ENCODE measurements at regions of chr1 and their contacts with region 1.

Region 1: GRCh38 chr1:45011837-45012638 is at the start of gene UROD:
- DNase-seq: peak; percentile 92
- H3K4me3 ChIP-seq: peak within 1 kb of the TSS; percentile 93 to 96
- H3K27ac ChIP-seq: peak within 1 kb of the TSS; percentile 69 to 87
- H3K4me1 ChIP-seq: peaks cover 6 to 36% of the 10 kb centered on the region in 2 experiments
- H3K27me3 ChIP-seq: no peaks in the 10 kb centered on the region
- CTCF ChIP-seq: no peak
- EP300 ChIP-seq: 0 out of 4 replicates have a peak, but pooled peaks of 1 of the 2 experiments have one; percentile 33
- RAD21 ChIP-seq: no peak
- polyA plus RNA-seq, gene UROD: 230 and 247 TPM in 2 replicates

Region 2: DNA sequence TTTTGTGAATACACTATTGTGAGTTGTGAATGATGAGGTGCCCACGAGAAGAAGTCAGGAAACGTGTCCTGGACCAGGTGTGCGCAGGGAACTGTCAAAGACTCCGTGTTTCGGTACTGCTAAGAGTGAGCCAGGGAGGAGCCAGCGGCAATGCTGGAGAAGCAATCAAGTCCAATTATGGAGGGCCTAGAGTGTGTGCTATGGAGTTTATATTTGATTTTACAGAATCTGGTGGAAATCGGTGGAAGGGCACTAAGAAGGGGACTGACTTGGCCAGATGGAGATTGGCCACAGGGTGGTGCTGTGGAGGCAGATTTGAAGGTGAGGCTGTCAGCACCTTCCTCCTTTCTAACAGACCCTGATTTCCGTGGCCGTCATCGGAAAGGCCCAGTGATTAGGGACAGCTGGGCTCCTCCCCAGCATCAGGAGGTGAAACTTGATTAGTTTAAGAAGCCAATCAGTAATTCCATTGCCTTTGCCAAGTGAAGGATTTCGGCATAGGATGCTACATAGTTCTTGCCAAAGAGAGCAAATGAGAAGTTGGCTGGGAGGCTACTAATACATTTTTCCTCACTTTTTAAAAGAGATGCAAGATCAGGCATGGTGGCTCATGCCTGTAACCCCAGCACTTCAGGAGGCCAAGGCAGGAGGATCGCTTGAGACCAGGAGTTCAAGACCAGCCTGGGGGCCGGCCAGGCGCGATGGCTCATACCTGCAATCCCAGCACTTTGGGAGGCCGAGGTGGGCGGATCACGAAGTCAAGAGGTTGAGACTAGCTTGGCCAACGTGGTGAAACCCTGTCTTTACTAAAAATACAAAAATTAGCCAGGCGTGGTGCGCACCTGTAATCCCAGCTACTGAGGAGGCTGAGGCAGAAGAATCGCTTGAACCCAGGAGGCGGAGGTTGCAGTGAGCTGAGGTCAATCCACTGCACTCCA is 176.0 kb before region 1 on chr1:
- CTCF ChIA-PET with region 1: interaction called, 12 read pairs
- POLR2A ChIA-PET with region 1: interaction called, 4 read pairs
- DNase-seq: peak; percentile 83
- H3K4me3 ChIP-seq: no peak overlapping the region
- H3K27ac ChIP-seq: no peak overlapping the region
- H3K4me1 ChIP-seq: peaks cover 0 to 2% of the 10 kb centered on the region in 2 experiments; a peak in 1 of 4 replicates
- H3K27me3 ChIP-seq: no peaks in the 10 kb centered on the region
- CTCF ChIP-seq: peak; percentile 87
- EP300 ChIP-seq: no peak
- RAD21 ChIP-seq: peak; percentile 90

Region 3: DNA sequence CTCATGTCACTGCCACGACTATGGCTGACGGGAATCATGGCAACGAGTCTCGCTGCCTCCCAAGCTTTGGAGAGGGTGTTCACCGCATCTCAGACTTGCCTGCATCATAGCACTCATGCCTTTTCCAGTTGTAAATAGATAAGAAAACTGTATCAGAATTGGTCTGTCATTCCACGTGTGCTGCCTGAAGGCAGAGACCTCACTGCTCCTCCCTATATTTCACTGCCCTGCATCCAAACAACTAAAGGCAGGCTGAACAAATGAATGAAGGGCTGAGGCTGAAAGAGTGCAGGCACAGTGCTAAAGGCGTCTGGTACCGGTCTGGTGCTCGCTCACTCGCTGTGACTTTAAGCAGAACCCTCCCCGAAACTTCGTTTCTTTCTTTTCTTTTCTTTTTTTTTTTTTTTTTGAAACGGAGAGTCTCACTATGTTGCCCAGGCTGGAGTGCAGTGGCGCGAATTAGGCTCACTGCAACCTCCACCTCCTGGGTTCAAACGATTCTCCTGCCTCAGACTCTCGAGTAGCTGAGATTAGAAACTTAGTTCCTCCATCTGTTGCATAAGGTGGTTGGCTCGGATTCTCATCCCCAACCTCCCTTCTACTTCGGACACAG is 26.2 kb before region 1 on chr1:
- CTCF ChIA-PET with region 1: interaction called, 11 read pairs
- POLR2A ChIA-PET with region 1: no interaction called
- DNase-seq: no peak
- H3K4me3 ChIP-seq: peak overlapping the region; percentile 74 to 75
- H3K27ac ChIP-seq: peak overlapping the region in 1 of 2 experiments; percentile 33; a peak in 1 of 4 replicates
- H3K4me1 ChIP-seq: peaks cover 5 to 9% of the 10 kb centered on the region in 2 experiments; a peak in 2 of 4 replicates
- H3K27me3 ChIP-seq: no peaks in the 10 kb centered on the region
- CTCF ChIP-seq: no peak
- EP300 ChIP-seq: no peak
- RAD21 ChIP-seq: no peak

Region 4: DNA sequence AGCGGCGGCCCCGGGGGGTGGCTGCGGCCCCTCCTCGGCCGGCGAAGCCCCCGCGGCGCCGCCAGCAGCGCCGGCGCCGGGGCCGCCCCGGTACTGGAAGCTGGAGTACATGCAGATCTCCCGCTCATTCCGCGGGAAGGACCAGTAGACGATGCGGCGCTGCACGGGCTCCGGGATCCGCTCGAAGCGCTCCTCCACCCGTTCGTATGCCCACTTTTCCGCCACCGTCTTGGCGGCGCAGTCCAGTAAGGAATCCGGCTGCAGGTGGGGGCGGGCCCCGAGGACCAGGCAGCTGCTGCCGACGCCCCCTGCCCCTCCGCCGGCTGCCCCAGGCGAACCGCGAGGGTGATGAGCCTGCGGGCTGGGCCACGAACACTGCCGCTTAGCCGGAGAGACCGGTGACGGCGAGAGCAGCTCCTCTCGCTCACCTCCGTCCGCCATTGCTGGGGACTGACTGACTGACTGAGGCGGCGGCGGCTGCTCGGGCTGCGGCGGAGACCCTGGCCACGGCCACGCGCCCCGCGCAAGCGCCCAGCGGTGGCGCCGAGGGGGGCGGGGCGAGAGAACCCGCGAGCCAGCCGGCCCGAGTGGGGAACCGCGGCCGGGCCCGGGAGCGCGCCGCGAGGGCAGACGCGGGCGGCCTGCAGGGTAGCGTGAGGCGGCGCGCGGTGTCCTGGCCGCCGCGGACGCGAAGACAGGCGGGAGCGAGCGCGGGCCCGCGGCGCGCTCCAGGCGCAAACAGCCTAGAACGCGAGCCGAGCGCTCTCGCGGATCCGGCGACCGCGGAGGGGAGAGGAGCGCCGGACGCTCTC is 194.1 kb after region 1 on chr1 and contains the start of gene ZSWIM5:
- CTCF ChIA-PET with region 1: interaction called, 14 read pairs
- POLR2A ChIA-PET with region 1: no interaction called
- DNase-seq: peak; percentile 92
- H3K4me3 ChIP-seq: peak within 1 kb of the TSS; percentile 60 to 69
- H3K27ac ChIP-seq: peak within 1 kb of the TSS in 1 of 2 experiments; percentile 87; a peak in 2 of 4 replicates
- H3K4me1 ChIP-seq: peaks cover 0 to 3% of the 10 kb centered on the region in 2 experiments; a peak in 2 of 4 replicates
- H3K27me3 ChIP-seq: peaks cover 42% of the 10 kb centered on the region; the same call in 1 of the 2 replicates
- CTCF ChIP-seq: no peak
- EP300 ChIP-seq: no peak
- RAD21 ChIP-seq: no peak
- polyA plus RNA-seq, gene ZSWIM5: 0.07 and 0.21 TPM in 2 replicates

Region 5: GRCh38 chr1:45303582-45304310 is 291.7 kb after region 1 on chr1:
- CTCF ChIA-PET with region 1: interaction called, 470 read pairs
- POLR2A ChIA-PET with region 1: interaction called, 50 read pairs
- DNase-seq: peak; percentile 97
- H3K4me3 ChIP-seq: peak overlapping the region; percentile 68 to 78
- H3K27ac ChIP-seq: peak overlapping the region; percentile 77 to 87
- H3K4me1 ChIP-seq: peaks cover 0 to 13% of the 10 kb centered on the region in 2 experiments; a peak in 1 of 4 replicates
- H3K27me3 ChIP-seq: no peaks in the 10 kb centered on the region
- CTCF ChIP-seq: peak; percentile 74
- EP300 ChIP-seq: no peak
- RAD21 ChIP-seq: peak; percentile 60

Region 6: DNA sequence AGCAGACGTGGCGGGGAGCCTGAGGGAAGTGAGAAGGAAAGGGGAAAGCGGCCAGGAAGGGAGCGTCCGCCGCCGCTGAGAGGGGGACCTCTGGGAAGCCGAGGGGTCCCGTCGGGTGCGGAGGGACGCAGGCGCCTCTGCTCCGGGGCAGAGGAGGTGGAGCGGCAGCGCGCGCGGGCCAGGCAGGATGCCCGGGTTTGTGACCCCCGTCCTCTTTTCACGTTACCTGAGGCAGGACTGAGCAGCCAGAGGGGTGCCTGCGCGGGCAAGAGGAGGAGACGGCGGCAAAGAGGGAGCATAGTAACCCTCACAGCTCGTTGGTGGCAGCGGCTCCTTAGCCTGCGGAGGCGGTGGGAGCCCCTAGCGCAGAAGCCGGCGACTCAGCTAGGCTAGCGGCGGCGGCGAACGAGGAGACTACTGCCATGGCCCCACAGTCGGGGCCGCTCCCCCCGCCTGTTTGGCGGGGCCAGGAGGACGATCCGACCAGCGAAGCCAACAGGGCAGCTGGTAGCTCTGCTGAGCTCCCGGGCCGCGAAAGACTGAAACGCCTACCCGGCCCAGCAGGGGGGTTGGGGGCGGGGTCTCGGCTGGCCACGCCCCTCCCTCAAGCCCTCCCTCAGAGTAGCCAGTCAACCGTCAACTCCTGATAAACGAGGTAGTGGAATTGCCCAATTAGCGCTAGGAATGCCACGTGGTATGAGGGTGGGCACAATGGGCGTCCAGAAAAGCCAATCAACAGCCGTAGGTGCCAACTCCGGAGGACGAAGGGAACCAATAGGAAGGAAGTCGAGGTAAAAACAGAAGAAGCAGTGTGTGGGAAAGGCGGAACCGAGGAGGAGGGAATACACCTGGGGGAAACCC is 478.8 kb after region 1 on chr1 and contains the start of gene TESK2:
- CTCF ChIA-PET with region 1: interaction called, 30 read pairs
- POLR2A ChIA-PET with region 1: interaction called, 3 read pairs
- DNase-seq: peak; percentile 98
- H3K4me3 ChIP-seq: peak within 1 kb of the TSS; percentile 68 to 98
- H3K27ac ChIP-seq: peak within 1 kb of the TSS in 1 of 2 experiments; percentile 47; a peak in 2 of 4 replicates
- H3K4me1 ChIP-seq: peaks cover 0 to 5% of the 10 kb centered on the region in 2 experiments; a peak in 2 of 4 replicates
- H3K27me3 ChIP-seq: no peaks in the 10 kb centered on the region
- CTCF ChIP-seq: no peak
- EP300 ChIP-seq: no peak
- RAD21 ChIP-seq: no peak
- polyA plus RNA-seq, gene TESK2: 1.3 TPM in 2 replicates